Right ventricle myocardium inferior (tissue), 1 donor: ENCODE measurements at regions of chr17 and their contacts with region 1.

Region 1: DNA sequence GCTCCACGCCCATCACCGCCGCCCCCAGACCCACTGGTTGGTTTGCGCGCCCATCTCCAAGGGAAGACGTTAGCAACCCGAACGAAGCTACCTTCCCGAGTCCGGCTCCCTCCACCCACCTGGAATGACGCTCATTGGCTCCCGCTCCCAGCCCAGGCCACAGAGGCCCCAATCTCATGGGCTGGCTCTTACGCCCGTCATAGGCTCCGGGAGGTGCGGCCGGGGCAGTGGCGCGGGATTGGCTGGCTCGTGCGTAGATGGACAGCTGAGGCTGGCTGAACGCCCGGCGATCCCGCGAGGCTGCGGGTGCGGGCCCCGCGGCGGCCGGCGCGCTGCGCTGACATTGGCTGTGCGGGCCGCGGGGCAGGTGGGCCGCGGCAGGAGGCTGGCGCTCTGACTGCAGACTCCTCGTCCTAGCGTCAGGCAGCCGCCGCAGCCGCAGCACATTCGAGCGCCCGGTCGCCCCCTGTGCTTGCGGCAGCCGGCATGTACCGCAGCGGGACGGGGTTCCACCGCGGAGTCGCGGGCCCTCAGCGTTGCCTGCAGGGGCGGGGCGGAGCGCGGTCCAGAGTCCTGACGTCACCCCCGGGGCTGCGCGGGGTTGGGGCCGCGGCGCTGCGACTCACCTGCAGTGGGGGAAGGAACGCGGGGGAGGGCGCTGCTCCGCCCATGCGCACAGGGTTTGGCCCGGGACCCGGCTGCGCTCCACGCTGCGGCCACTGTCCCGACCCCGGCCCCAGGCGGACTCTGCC is 453 bp upstream of the MYH10 start:
- DNase-seq: peak; percentile 98
- ATAC-seq: peak; percentile 98

Region 2: GRCh38 chr17:8435245-8436168 is 195.5 kb before region 1 on chr17 and contains the start of gene NDEL1:
- intact Hi-C with region 1: loop called (anchors 5 kb)
- DNase-seq: peak; percentile 100
- ATAC-seq: peak; percentile 98
- total RNA-seq, gene NDEL1: 29.2 TPM

Region 3: DNA sequence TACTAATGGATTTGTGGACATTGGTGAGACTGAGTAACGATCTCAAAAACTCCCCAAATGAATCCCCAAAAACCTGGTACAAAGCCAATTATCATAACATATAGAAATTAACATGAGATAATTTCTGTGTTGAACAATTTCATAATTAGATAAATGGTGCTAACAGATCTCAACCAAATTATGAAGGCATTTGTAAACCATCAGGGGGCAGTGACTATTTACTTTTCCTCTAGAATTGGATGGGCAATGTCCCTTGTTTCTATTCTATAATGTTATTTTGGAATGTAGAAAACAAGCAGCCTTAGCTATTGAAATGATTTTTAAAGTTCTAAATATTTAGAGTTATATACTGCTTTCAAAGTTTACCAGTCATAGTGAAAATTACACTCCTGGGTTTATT is 58.2 kb before region 1 on chr17:
- intact Hi-C with region 1: loop called (anchors 5 kb)
- DNase-seq: no peak
- ATAC-seq: no peak

Region 4: GRCh38 chr17:8611619-8612298 is 19.2 kb before region 1 on chr17:
- intact Hi-C with region 1: loop called (anchors 2 kb)
- DNase-seq: no peak
- ATAC-seq: peak; percentile 16

Region 5: DNA sequence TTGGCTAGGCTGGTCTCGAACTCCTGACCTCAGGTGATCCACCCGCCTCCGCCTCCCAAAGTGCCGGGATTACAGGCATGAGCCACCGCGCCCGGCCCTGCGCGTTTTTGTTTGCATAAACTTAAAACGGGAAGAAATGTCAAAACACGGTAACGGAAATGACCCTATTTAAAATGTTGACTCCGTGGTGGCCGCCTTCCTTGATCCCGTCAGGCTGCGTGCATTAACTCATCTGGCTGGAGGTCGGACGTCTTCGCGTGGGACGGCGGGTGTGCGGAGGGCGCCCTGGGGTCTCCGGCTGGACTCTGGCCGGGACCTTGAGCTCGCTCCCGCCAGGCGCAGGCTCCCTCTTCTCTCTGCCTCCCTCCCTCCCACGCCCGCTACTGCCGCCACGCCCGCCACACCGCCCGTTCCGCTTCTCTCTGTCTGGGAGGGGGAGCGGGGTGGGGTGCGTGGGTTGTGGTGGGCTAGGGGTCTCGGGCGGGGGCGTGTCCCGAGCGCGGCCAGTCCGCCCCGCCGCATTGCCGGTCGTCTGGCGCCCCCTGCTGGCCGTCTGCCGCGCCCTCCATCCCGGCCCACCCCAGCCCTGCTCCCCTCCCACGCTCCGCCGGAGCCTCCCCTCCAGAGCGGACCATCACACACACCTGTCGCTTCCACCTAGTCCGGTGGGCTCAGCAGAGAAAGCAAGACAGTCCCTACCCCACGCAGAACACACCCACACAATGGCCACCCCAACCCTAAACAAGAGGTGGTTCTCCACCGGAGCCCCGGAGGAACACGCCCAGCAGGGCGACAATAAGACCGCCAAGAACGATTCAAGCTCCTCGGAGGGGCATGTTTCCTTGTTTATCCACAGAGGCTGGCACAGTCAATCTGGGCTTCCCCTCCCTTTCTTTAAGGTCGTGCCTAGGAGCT is 114.9 kb after region 1 on chr17:
- intact Hi-C with region 1: loop called (anchors 5 kb)
- DNase-seq: peak; percentile 87
- ATAC-seq: peak; percentile 95